ENCODE measurements at regions of chr9 and their contacts with region 1.

Region 1: GRCh38 chr9:137590462-137591383 is at the start of gene ZMYND19:
- DNase-seq: peak; percentile 72 to 98 (median 77)

Region 2: DNA sequence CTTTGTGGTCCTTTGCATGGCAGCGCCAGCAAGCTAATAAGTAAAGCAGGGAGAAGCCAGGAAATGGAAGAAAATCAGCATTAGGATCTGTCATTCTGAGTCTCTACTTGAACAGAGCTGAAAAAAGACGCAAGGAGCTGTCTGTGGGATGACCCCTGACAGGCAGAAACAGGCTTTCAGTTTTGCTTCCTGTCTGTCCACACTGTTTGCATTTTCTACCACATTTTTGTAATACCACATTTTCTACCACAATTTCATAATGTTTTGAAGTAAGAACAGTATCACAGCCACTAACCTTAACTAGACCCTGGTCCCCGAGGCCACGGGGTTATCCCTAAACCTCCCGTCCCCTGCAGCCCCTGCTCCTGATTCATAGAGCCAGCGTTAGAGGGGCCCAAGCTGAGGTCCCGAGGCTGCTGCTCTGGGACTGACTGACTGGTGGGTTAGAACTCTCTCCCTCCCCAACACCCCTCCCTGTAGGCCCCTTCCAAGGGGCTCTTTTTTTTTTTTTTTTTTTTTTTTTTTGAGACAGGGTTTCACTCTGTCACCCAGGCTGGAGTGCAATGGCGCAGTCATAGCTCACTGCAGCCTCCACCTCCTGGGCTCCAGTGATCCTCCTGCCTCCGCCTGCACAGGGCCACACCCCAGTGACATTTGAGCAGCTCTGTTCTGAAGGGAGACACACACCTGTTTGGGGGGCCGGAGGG is 590.4 kb before region 1 on chr9:
- intact Hi-C with region 1: no loop called
- DNase-seq: no peak

Region 3: DNA sequence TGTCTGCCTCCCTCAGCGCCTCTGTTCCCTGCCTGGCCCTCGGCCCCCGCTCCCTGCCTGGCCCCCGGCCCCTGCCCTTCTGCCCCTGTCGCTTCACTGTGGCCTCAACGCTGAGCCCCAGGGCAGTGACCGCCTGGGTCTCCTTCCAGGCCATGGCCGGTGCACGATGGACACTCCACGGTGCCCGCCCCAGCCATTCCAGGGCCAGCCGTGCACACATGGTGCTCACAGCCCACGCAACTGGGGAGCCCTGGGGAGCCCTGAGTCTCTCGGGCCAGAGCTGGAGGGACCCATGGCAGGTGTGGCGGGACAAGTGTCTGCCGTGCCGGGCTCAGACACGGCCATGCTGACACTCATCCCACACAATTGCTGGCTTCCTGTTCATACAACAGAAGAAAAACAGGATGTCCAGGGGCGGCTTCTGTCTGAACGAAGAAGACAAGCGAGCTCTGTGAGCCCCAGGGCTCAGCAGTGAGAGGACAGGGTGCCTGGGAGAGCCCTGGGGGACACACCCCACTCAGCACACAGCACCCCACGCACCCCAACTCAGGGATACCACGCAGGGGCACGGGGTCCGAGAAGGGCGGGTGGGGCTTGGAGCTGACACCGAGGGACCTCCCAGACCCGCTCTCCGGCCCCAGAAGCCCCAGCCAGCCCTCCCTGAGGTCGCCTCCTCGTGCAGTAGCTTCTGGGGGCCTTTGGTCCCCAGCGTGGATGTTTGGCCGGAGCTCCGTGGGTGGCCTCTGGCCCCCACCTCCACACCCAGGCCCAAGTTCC is 203.4 kb before region 1 on chr9:
- intact Hi-C with region 1: no loop called
- DNase-seq: no peak

Region 4: GRCh38 chr9:137605121-137606004 is 14.6 kb after region 1 on chr9 and contains the start of gene ARRDC1:
- intact Hi-C with region 1: loop called (anchors 2 kb)
- DNase-seq: peak; percentile 74 to 98 (median 89)

Region 5: GRCh38 chr9:137892424-137893191 is 301.9 kb after region 1 on chr9:
- intact Hi-C with region 1: no loop called
- DNase-seq: peak in 6 of 10 donors; percentile 55 to 91 (median 76)

Measured in posterior cingulate gyrus (tissue), 11 donors.